ENCODE measurements at regions of chr12 and their contacts with region 1.

Region 1: DNA sequence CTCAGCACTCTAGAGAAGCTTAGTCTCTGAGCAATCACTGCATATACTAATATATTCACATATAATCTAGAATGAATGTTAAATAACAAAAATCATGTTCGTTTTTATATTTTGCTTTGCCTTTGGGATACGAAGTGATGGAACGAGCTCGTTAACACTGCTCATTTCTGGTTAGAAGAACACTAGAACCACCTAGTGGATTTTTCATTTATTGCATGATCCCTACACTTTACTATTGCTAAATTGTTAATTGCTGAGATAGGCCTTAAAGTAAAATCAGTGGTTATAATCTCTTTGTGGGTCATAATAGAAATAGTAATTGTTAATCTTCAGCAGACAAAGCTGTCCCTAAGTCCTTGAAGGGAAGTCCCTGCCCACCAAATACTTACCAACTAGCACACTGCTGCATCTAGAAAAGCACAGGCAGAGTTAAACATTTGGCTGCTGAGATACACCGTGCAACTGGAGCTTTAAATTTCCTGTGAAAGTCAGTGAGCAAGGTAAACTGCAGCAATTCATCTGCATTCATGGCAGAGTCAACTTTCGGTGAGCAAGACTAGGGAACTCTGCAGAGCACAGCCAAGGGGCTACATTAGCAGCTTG is 353.7 kb downstream of the APAF1 start:
- H3K4me3 ChIP-seq: no peak overlapping the region
- H3K27ac ChIP-seq: no peak overlapping the region
- H3K4me1 ChIP-seq: no peaks in the 10 kb centered on the region
- CTCF ChIP-seq: peak; percentile 22; the same call in 1 of the 2 replicates

Region 2: GRCh38 chr12:98490501-98491453 is 508.0 kb before region 1 on chr12:
- CTCF ChIA-PET with region 1: interaction called, 10 read pairs
- POLR2A ChIA-PET with region 1: no interaction called
- H3K4me3 ChIP-seq: peak overlapping the region; percentile 12; the same call in 1 of the 2 replicates
- H3K27ac ChIP-seq: no peak overlapping the region
- H3K4me1 ChIP-seq: no peaks in the 10 kb centered on the region; the same call in 1 of the 2 replicates
- CTCF ChIP-seq: peak; percentile 86

Region 3: GRCh38 chr12:98698603-98699463 is 300.0 kb before region 1 on chr12:
- CTCF ChIA-PET with region 1: interaction called, 17 read pairs
- POLR2A ChIA-PET with region 1: no interaction called
- H3K4me3 ChIP-seq: no peak overlapping the region
- H3K27ac ChIP-seq: no peak overlapping the region
- H3K4me1 ChIP-seq: no peaks in the 10 kb centered on the region
- CTCF ChIP-seq: peak; percentile 54

Region 4: GRCh38 chr12:98977186-98977585 is 21.6 kb before region 1 on chr12:
- CTCF ChIA-PET with region 1: interaction called, 10 read pairs
- POLR2A ChIA-PET with region 1: no interaction called
- H3K4me3 ChIP-seq: no peak overlapping the region
- H3K27ac ChIP-seq: no peak overlapping the region
- H3K4me1 ChIP-seq: no peaks in the 10 kb centered on the region
- CTCF ChIP-seq: no peak

Region 5: GRCh38 chr12:99020871-99021270 is 22.1 kb after region 1 on chr12:
- CTCF ChIA-PET with region 1: no interaction called
- POLR2A ChIA-PET with region 1: no interaction called
- H3K4me3 ChIP-seq: no peak overlapping the region
- H3K27ac ChIP-seq: no peak overlapping the region
- H3K4me1 ChIP-seq: no peaks in the 10 kb centered on the region
- CTCF ChIP-seq: no peak

Measured in HEK293 (cell line).